GM13977 (cell line): ENCODE measurements at regions of chr1 and their contacts with region 1.

Region 1: DNA sequence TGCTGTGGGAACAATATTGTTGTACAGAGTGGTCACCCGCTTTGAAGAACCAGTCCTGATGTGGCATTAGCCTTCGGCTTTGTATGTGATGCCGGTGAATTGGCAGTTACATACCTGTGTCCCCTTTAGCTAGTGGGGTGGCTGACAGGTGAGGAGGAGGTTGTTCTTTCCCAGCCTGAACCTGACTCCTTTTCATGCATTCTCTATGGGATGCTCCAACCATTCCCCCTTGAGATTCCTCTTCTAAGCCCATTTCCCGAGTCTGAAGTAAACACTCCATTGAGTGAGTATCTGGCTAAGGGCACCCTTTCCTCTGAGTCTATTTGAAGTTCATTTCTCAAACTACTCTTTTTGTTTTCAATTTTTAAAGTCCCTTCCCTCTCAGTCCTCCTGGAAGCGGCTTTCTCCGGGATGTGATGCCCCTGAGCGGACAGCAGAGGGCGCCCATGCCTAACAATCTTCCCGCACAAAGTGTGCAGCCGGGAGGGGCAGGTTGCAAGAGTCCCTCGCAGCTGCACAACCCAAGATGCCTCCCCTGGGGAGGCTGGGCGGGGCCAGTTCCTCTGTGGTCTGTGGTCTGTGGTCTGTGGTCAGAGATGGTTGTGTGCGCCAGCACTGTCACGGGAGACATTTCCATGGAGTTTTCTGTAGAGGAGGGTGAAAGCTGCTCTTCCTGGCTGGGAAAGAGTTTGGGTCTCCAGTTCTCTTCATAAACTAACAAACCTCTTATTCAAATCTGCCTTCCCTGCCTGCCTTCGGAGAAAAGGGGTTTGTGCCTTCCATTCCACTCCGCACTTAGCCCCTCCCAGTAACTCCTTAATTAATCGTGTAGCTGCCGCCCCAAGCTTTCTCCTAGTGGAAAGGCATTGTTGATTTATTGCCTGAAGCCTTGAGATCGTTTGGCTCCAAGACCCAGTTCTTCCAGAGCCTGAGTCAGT is 36.4 kb upstream of the LMX1A start:
- DNase-seq: peak; percentile 85
- CTCF ChIP-seq: peak; percentile 92

Region 2: GRCh38 chr1:165717918-165718515 is 325.1 kb after region 1 on chr1:
- in situ Hi-C with region 1: loop called (anchors 25 kb)
- DNase-seq: peak; percentile 57
- CTCF ChIP-seq: peak; percentile 82

Region 3: GRCh38 chr1:165898837-165899236 is 505.9 kb after region 1 on chr1:
- in situ Hi-C with region 1: loop called (anchors 25 kb)
- DNase-seq: no peak
- CTCF ChIP-seq: no peak

Region 4: DNA sequence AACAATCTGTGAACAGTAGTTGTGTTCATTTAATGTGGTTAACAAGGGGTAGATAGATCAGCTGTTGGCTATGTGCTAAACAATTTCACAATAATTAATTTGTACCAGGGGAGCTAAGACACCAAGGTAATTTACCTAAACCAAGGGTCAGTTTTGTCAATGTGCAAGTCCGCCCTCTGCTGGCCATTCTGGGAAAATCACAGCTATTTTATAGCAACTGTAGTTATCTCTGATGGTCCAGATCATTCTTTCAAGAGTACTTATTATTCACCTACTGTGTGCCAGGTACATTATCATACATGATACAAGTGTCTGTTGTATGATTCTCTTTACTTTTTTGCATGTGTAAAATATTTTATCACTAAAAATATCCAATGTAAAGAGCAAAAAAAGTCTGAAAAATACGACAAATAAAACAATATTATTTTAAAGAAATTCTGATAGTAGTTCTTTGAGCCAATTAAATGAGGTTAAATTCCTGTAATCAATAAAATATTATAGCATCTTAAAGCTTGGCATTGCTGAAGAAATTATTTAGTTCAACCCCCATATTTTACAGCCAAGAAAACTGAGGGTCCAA is 1086.2 kb after region 1 on chr1:
- in situ Hi-C with region 1: loop called (anchors 25 kb)
- DNase-seq: peak; percentile 19
- CTCF ChIP-seq: peak; percentile 86